HepG2 (cell line): ENCODE measurements at regions of chr6 and their contacts with region 1.

Region 1: GRCh38 chr6:53811082-53811481 is 16.3 kb downstream of the LRRC1 start:
- DNase-seq: peak; percentile 51
- ATAC-seq: peak; percentile 34; the same call in 2 of the 3 replicates
- H3K4me3 ChIP-seq: no peak overlapping the region
- H3K27ac ChIP-seq: no peak overlapping the region
- H3K4me1 ChIP-seq: peaks cover 61% of the 10 kb centered on the region
- H3K27me3 ChIP-seq: no peaks in the 10 kb centered on the region
- CTCF ChIP-seq: no peak
- EP300 ChIP-seq: no peak
- POLR2A ChIP-seq: no peak
- RAD21 ChIP-seq: no peak

Region 2: GRCh38 chr6:53651764-53652401 is 159.2 kb before region 1 on chr6:
- CTCF ChIA-PET with region 1: no interaction called
- POLR2A ChIA-PET with region 1: no interaction called
- in situ Hi-C with region 1: no loop called
- intact Hi-C with region 1: no loop called
- DNase-seq: peak; percentile 86
- ATAC-seq: peak; percentile 98
- H3K4me3 ChIP-seq: peak overlapping the region; percentile 65 to 84 (median 73)
- H3K27ac ChIP-seq: peak overlapping the region; percentile 85
- H3K4me1 ChIP-seq: peaks cover 27% of the 10 kb centered on the region
- H3K27me3 ChIP-seq: no peaks in the 10 kb centered on the region; a peak in 1 of 5 replicates
- CTCF ChIP-seq: peak; percentile 93
- EP300 ChIP-seq: peak in 1 of 2 experiments; percentile 40; a peak in 2 of 4 replicates
- POLR2A ChIP-seq: peak; percentile 88
- RAD21 ChIP-seq: peak; percentile 79

Region 3: GRCh38 chr6:53825532-53826321 is 14.6 kb after region 1 on chr6:
- CTCF ChIA-PET with region 1: no interaction called
- POLR2A ChIA-PET with region 1: no interaction called
- in situ Hi-C with region 1: no loop called
- intact Hi-C with region 1: no loop called
- DNase-seq: no peak
- ATAC-seq: no peak
- H3K4me3 ChIP-seq: no peak overlapping the region
- H3K27ac ChIP-seq: no peak overlapping the region
- H3K4me1 ChIP-seq: peaks cover 66% of the 10 kb centered on the region
- H3K27me3 ChIP-seq: no peaks in the 10 kb centered on the region
- CTCF ChIP-seq: no peak
- EP300 ChIP-seq: no peak
- POLR2A ChIP-seq: no peak
- RAD21 ChIP-seq: no peak

Region 4: DNA sequence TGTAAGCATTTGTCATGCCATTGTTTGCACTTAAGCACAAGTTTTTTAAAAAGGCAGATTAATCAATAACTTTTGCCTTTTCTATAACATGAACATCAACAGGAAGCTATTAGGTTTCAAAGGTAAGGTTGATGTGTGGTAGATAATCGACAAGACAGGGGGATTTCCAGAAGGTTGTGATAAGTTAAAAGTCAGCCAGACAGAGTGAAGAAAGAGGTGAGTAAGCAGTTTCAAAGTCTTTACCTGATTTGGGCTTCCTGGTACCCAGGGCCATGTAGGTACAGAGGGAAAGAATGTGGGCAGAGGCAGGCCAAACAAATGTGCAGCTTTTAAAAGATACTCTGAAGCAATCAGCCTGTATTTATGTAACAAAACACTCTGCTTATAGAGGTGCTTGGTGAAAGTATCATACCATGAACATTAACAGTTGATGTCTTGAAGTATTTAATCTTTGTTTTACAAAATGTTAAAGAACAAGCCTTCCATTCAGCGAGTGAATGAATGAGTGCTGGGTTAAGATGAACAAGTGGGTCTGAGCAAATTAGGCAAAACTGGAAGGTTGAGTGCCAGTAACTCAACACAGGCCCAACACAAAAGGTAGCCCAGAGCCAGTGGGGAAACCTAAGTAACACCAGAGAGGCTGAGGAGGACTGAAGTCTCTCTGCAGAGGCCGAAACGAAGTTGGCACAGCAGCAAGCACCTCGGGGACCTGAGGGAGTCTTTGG is 43.9 kb after region 1 on chr6:
- CTCF ChIA-PET with region 1: no interaction called
- POLR2A ChIA-PET with region 1: no interaction called
- in situ Hi-C with region 1: no loop called
- intact Hi-C with region 1: loop called (anchors 5 kb)
- DNase-seq: peak; percentile 91
- ATAC-seq: peak; percentile 96
- H3K4me3 ChIP-seq: no peak overlapping the region
- H3K27ac ChIP-seq: peak overlapping the region; percentile 48
- H3K4me1 ChIP-seq: peaks cover 46% of the 10 kb centered on the region
- H3K27me3 ChIP-seq: no peaks in the 10 kb centered on the region
- CTCF ChIP-seq: no peak
- EP300 ChIP-seq: peak in 1 of 2 experiments; percentile 82; a peak in 2 of 4 replicates
- POLR2A ChIP-seq: no peak
- RAD21 ChIP-seq: no peak